ENCODE measurements at regions of chr16 and their contacts with region 1.

Region 1: DNA sequence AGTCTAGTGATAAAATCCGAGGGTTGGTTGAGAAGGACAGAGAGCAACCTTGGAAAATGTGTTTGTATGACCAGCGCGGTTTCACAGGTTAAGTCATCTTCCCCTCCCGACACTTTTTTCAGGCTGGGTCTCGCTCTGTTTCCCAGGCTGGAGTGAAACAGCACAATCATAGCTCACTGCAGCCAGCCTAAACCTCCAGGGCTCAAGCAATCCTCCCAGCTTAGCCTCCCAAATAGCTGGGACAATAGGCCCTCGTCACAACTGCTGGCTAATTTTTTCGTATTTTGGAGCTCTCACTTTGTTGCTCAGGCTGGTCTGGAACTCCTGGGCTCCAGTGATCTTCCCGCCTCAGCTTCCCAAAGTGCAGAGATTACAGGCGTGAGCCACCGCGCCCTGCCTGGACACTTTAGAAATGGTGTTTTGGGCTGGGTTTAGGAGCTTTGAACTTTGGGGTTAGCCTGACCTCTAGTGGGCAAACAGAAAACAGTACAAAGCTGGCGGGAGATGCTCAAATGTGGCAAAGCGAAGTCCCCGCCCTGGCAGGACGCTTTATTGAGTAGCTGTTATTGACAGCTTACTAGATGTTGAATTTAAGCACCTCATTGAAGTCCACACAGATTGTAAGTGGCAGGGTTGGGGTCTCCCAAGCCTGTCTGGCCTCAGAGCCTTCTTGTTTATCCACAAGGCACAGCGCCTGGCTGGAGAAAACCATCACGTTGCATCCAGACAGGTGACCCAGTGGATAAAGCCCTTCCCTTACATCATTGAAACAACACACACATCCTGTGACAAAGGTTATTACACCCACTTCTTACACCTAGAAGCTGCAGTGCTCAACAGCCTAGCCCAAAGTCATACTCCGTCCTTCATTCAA is 34.7 kb upstream of the RBBP6 start:
- ATAC-seq: peak; percentile 79 to 99 (median 90)
- H3K4me3 ChIP-seq: no peak overlapping the region
- H3K27ac ChIP-seq: no peak overlapping the region
- H3K4me1 ChIP-seq: no peaks in the 10 kb centered on the region

Region 2: GRCh38 chr16:23678430-23679273 is 826.1 kb before region 1 on chr16 and contains the start of gene PLK1:
- in situ Hi-C with region 1: loop called in 1 of 9 experiments (anchors 25 kb)
- ATAC-seq: peak; percentile 91 to 99 (median 98)
- H3K4me3 ChIP-seq: peak within 1 kb of the TSS; percentile 30 to 44 (median 34)
- H3K27ac ChIP-seq: peak within 1 kb of the TSS in 1 of 2 donors; percentile 50
- H3K4me1 ChIP-seq: peaks cover 4 to 14% of the 10 kb centered on the region in 2 donors
- total RNA-seq, gene PLK1: 0.92 to 70.2 (median 4.3) TPM

Region 3: DNA sequence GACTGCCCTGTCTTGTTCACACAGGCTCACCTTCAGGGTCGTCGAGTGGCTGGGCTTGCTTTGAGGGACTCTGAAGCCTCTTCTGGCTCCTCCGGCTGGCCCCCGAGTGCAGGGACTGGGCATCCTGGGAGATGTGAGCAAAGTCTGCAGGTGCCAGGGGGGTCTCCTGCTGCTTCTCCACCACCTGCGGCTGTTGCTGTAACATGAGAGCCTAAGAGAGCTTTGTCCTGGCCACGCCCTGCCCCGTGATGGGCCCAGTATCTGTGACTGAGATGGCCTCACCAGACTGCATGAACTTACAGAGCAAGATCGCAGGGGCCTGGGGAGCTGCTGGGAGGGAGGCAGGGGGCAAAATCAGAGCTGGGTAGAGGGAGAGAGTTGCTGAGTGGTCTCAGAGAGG is 804.2 kb before region 1 on chr16:
- in situ Hi-C with region 1: loop called in 2 of 9 experiments (anchors 25 kb)
- ATAC-seq: peak in 3 of 8 experiments; percentile 75 to 88 (median 82)
- H3K4me3 ChIP-seq: no peak overlapping the region
- H3K27ac ChIP-seq: no peak overlapping the region
- H3K4me1 ChIP-seq: no peaks in the 10 kb centered on the region

Region 4: DNA sequence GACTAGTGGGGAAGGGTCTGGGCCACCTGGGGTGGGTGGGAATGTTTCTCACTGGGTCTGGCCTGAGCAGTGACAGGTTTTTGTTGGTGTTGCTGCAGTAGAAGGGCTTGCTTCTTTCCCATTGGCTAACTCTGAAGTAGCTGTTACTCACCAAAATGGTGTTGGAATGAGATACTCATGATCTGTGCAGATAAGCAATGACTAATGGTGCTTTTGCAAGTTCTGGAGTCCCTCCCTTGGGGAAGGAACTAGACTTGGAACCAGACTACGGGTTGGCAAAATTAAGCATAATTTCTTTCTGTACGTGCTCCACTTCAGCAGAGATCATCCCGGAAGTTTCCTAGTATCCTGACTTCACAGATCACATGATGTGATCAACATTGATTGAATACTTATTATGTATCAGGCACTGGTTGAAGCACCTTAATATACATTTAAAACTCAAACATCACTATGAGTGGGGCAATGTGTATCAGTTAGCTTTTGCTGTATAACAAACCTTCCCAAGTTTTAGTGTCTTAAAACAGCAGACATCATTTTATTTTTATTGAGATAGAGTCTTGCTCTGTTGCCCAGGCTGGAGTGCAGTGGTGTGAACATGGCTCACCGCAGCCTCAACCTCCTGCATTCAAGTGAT is 719.8 kb before region 1 on chr16:
- in situ Hi-C with region 1: loop called in 1 of 9 experiments (anchors 25 kb)
- ATAC-seq: peak in 2 of 8 experiments; percentile 95 to 98
- H3K4me3 ChIP-seq: no peak overlapping the region
- H3K27ac ChIP-seq: no peak overlapping the region
- H3K4me1 ChIP-seq: no peaks in the 10 kb centered on the region

Region 5: DNA sequence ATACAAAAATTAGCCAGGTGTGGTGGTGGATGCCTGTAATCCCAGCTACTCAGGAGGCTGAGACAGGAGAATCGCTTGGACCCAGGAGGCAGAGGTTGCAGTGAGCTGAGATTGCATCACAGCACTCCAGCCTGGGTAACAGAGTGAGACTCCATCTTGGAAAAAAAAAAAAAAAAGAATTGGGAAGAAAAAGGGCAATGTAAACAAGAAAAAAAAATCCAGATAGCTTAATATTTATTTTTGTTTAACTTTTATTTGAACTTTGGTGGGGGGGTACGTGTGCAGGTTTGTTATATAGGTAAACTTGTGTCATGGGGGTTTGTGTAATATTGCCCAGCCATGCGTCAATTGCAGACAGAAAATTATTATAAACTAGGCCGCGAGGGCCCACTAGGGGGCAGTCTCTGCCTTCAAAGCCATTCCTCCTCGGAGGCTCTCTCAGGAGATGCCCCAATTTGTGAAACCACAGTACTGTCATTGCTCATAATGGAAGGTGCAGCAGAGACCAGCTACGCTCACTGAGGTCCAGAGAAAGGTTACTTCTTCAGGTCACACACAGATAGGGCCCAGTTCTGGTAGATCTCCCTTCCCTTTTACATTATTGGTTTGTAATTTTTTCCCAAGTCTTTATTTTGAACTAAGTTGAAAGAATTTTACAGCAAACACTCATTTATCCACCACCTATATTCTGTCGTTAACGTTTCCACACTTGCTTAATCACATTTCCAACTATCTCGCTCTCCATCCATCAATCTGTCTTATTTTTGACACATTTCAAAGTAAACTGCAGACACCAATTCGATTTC is 462.7 kb before region 1 on chr16:
- in situ Hi-C with region 1: loop called in 8 of 9 experiments (anchors 5 to 25 kb)
- ATAC-seq: peak; percentile 35 to 92 (median 54)
- H3K4me3 ChIP-seq: no peak overlapping the region
- H3K27ac ChIP-seq: no peak overlapping the region
- H3K4me1 ChIP-seq: no peaks in the 10 kb centered on the region

Region 6: GRCh38 chr16:24070851-24071250 is 433.9 kb before region 1 on chr16:
- in situ Hi-C with region 1: loop called in 1 of 9 experiments (anchors 25 kb)
- ATAC-seq: peak in 4 of 8 experiments; percentile 18 to 89 (median 88)
- H3K4me3 ChIP-seq: no peak overlapping the region
- H3K27ac ChIP-seq: no peak overlapping the region
- H3K4me1 ChIP-seq: no peaks in the 10 kb centered on the region

Region 7: GRCh38 chr16:24609740-24610415 is 105.2 kb after region 1 on chr16:
- in situ Hi-C with region 1: no loop called
- ATAC-seq: peak; percentile 80 to 91 (median 90)
- H3K4me3 ChIP-seq: peak overlapping the region; percentile 45 to 77 (median 58)
- H3K27ac ChIP-seq: peak overlapping the region; percentile 76 to 94
- H3K4me1 ChIP-seq: peaks cover 9 to 10% of the 10 kb centered on the region in 2 donors